Motor neuron (in vitro differentiated cells): ENCODE measurements at regions of chr6 and their contacts with region 1.

Region 1: GRCh38 chr6:14144678-14145113 is 27.1 kb downstream of the CD83 start:
- ATAC-seq: peak in 5 of 8 experiments; percentile 42 to 91 (median 78)
- H3K4me3 ChIP-seq: no peak overlapping the region
- H3K27ac ChIP-seq: no peak overlapping the region
- H3K4me1 ChIP-seq: peaks cover 21 to 33% of the 10 kb centered on the region in 2 donors

Region 2: GRCh38 chr6:15389765-15390723 is 1245.3 kb after region 1 on chr6:
- in situ Hi-C with region 1: loop called in 1 of 9 experiments (anchors 25 kb)
- ATAC-seq: peak in 6 of 8 experiments; percentile 63 to 85 (median 76)
- H3K4me3 ChIP-seq: no peak overlapping the region
- H3K27ac ChIP-seq: no peak overlapping the region
- H3K4me1 ChIP-seq: peaks cover 50 to 55% of the 10 kb centered on the region in 2 donors